ENCODE measurements at regions of chr2 and their contacts with region 1.

Region 1: GRCh38 chr2:102615622-102616436 is 3.5 kb upstream of the SLC9A2 start:
- DNase-seq: peak; percentile 57
- ATAC-seq: peak; percentile 74
- H3K4me3 Mint-ChIP-seq: no peak overlapping the region
- H3K27ac Mint-ChIP-seq: no peak overlapping the region
- H3K4me1 Mint-ChIP-seq: peaks cover 14% of the 10 kb centered on the region
- H3K27me3 Mint-ChIP-seq: peaks cover 45% of the 10 kb centered on the region
- CTCF ChIP-seq: peak; percentile 78

Region 2: GRCh38 chr2:102449370-102449974 is 166.4 kb before region 1 on chr2:
- CTCF ChIA-PET with region 1: interaction called, 15 read pairs
- POLR2A ChIA-PET with region 1: no interaction called
- DNase-seq: peak; percentile 51
- ATAC-seq: no peak
- H3K4me3 Mint-ChIP-seq: no peak overlapping the region
- H3K27ac Mint-ChIP-seq: no peak overlapping the region
- H3K4me1 Mint-ChIP-seq: no peaks in the 10 kb centered on the region
- H3K27me3 Mint-ChIP-seq: no peaks in the 10 kb centered on the region
- CTCF ChIP-seq: no peak

Region 3: DNA sequence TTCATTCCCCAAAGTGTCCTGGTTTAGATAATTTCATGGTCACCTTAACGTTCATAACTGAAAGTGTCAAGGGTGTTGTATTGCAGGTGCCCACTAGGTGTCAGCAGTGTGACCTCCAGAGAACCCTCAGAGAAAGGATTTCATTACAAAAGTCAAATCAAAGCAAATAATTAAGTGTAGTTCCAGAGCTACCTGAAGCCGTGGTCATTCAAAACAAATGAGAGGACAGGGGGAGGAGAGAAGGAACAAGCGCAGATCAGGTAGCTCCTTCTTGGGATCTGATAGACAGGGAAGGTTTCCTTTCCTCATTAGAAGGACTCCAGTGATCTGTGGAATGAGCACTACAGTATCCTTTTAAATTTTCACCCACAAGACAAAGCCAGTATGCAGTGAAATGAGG is 142.8 kb before region 1 on chr2 and contains the start of gene SLC9A4:
- CTCF ChIA-PET with region 1: interaction called, 17 read pairs
- POLR2A ChIA-PET with region 1: interaction called, 4 read pairs
- DNase-seq: peak; percentile 62
- ATAC-seq: peak; percentile 85
- H3K4me3 Mint-ChIP-seq: no peak within 1 kb of the TSS
- H3K27ac Mint-ChIP-seq: no peak within 1 kb of the TSS
- H3K4me1 Mint-ChIP-seq: peaks cover 8% of the 10 kb centered on the region
- H3K27me3 Mint-ChIP-seq: no peaks in the 10 kb centered on the region; the same call in 1 of the 2 replicates
- CTCF ChIP-seq: peak; percentile 75
- total RNA-seq, gene SLC9A4: 0.09 to 0.11 TPM in 2 of 3 replicates, not detected in the other

Region 4: DNA sequence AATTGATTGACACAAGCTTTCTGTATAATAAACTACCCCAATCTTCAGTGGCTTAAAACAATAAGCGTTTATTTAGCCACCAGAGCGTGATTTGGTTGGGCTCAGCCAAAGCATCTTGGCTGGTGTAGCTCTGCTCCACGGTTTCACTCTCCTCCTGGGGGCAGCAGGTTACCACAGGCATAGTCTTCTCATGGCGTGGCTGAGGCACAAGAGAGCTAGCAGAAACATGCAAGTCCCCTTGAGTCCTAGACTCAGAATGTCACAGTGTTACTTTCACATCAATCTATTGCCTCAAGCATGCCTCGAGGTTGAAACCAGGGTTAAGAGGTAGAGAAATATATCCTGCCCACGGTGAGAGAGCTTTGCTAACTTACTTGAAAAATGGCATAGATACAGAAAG is 16.3 kb before region 1 on chr2:
- CTCF ChIA-PET with region 1: interaction called, 17 read pairs
- POLR2A ChIA-PET with region 1: no interaction called
- DNase-seq: peak; percentile 14
- ATAC-seq: peak; percentile 51; the same call in 1 of the 2 replicates
- H3K4me3 Mint-ChIP-seq: no peak overlapping the region
- H3K27ac Mint-ChIP-seq: no peak overlapping the region
- H3K4me1 Mint-ChIP-seq: 0 out of 2 replicates have a peak, but pooled peaks cover 2% of the 10 kb centered on the region
- H3K27me3 Mint-ChIP-seq: no peaks in the 10 kb centered on the region
- CTCF ChIP-seq: no peak

Region 5: DNA sequence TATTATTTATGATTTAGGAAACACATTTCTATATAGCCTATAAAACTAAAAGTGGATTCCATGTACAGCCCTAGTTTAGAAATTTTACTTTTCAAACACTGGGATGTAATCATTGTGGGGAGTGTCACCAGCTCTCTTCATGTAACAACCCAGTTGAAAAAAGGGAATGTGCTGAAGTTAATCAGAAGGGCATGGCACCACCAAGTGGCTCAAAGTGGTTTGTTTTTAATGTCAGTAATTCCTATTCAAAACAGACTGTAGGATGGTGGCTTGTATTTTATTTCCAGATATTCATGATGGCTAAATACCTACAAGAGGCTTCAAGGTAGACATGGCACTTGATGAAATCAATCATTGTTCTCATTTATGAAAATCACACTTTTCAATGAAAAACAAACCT is 87.9 kb after region 1 on chr2:
- CTCF ChIA-PET with region 1: interaction called, 11 read pairs
- POLR2A ChIA-PET with region 1: no interaction called
- DNase-seq: no peak
- ATAC-seq: peak; percentile 46; the same call in 1 of the 2 replicates
- H3K4me3 Mint-ChIP-seq: no peak overlapping the region
- H3K27ac Mint-ChIP-seq: no peak overlapping the region
- H3K4me1 Mint-ChIP-seq: peaks cover 12% of the 10 kb centered on the region
- H3K27me3 Mint-ChIP-seq: no peaks in the 10 kb centered on the region
- CTCF ChIP-seq: no peak